HEK293 (cell line): ENCODE measurements at regions of chr15 and their contacts with region 1.

Region 1: GRCh38 chr15:99282121-99282520 is 30.8 kb downstream of the LRRC28 start:
- H3K4me3 ChIP-seq: no peak overlapping the region
- H3K27ac ChIP-seq: no peak overlapping the region
- H3K4me1 ChIP-seq: no peaks in the 10 kb centered on the region
- CTCF ChIP-seq: no peak

Region 2: GRCh38 chr15:99224372-99225214 is 57.5 kb before region 1 on chr15:
- CTCF ChIA-PET with region 1: no interaction called
- POLR2A ChIA-PET with region 1: no interaction called
- H3K4me3 ChIP-seq: no peak overlapping the region
- H3K27ac ChIP-seq: no peak overlapping the region
- H3K4me1 ChIP-seq: no peaks in the 10 kb centered on the region
- CTCF ChIP-seq: no peak

Region 3: DNA sequence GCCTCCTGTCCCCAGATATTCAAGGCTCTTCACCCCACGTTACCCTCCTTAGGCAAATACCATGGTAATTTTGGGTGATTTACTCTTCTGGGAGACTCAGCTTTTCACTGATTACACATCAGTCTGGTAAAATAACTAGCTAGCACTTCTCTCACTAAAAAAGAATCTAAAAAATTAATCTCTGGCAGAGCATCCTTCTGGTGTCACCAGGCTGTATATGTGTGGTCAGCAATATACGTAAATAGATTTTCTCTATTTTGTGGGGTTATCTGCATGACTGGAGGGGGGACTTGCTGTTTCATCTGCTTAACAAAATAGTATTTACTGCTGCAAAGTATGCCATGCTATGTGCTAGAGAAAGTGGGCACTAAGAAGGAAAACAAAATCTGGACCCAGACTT is 14.3 kb after region 1 on chr15:
- CTCF ChIA-PET with region 1: interaction called, 17 read pairs
- POLR2A ChIA-PET with region 1: no interaction called
- H3K4me3 ChIP-seq: no peak overlapping the region
- H3K27ac ChIP-seq: no peak overlapping the region
- H3K4me1 ChIP-seq: no peaks in the 10 kb centered on the region
- CTCF ChIP-seq: no peak

Region 4: GRCh38 chr15:99526176-99526575 is 244.1 kb after region 1 on chr15:
- CTCF ChIA-PET with region 1: no interaction called
- POLR2A ChIA-PET with region 1: no interaction called
- H3K4me3 ChIP-seq: no peak overlapping the region
- H3K27ac ChIP-seq: no peak overlapping the region
- H3K4me1 ChIP-seq: no peaks in the 10 kb centered on the region
- CTCF ChIP-seq: no peak